Activated CD4-positive, alpha-beta T cell treated with anti-CD3 and anti-CD28 coated beads for 36 hours (primary cell): ENCODE measurements at regions of chr17 and their contacts with region 1.

Region 1: DNA sequence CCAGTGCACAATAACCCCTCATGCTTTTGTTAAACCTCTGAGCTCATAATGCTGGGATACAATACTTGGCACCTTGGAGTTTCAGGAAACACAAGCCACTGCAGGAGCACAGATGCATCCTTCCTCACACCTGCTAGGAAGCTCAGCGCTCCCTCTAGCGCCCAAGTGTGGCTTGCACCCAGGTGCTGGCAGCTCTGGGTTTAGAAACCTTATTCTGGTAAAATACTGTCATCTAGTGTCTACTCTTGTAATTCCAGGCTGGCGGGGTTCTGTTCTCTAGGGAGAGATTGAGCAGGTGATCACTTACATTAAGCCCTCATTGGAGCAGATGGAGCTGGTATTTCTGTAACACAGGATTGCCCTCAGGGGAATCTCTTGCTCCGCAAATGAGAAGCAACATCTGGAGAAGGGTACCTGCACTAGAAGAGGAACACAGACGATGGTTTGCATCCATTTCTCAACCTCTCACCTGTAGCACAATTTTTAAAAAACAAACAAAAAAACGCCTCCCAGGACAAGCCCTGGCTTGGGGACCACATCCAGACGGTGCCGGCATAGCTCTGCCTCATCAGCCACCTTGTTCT is 1.5 kb downstream of the CCL1 start:
- DNase-seq: peak; percentile 91
- ATAC-seq: peak; percentile 98
- H3K4me3 Mint-ChIP-seq: no peak overlapping the region
- H3K27ac Mint-ChIP-seq: no peak overlapping the region
- H3K4me1 Mint-ChIP-seq: peaks cover 10% of the 10 kb centered on the region
- H3K27me3 Mint-ChIP-seq: peaks cover 20% of the 10 kb centered on the region

Region 2: DNA sequence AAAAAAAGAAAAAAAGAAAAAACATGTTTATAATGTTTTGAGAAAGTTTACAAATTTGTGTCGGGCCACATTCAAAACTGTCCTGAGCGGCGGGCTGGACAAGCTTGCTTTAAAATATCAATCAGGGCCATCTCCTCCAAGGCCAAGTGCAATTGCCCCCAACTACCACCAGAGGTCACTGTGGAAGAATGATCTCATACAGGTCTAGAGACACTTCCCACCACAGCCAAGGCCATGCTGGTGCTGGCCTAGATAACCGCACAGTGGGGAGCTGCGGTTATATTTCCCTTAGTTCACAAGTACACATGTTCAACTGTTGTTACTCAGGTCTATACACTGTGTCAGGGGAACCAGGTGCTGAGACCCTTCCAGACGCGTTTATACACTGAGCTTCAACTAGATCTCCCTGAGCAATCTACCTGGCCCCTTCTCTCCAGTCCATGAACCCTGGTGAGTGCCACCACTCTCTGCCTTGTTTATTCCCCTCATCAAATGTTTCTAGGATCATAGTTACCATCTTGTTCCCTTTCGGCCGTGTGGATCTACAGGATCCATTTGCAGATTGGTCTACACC is 190.2 kb before region 1 on chr17:
- CTCF ChIA-PET with region 1: interaction called, 40 read pairs
- POLR2A ChIA-PET with region 1: no interaction called
- intact Hi-C with region 1: loop called in 1 of 2 experiments (anchors 1 kb)
- DNase-seq: peak; percentile 70
- ATAC-seq: peak; percentile 78
- H3K4me3 Mint-ChIP-seq: no peak overlapping the region
- H3K27ac Mint-ChIP-seq: no peak overlapping the region
- H3K4me1 Mint-ChIP-seq: no peaks in the 10 kb centered on the region
- H3K27me3 Mint-ChIP-seq: peaks cover 10% of the 10 kb centered on the region

Region 3: GRCh38 chr17:34207572-34207971 is 154.0 kb before region 1 on chr17:
- CTCF ChIA-PET with region 1: interaction called, 225 read pairs
- POLR2A ChIA-PET with region 1: no interaction called
- intact Hi-C with region 1: no loop called
- DNase-seq: no peak
- ATAC-seq: no peak
- H3K4me3 Mint-ChIP-seq: no peak overlapping the region
- H3K27ac Mint-ChIP-seq: no peak overlapping the region
- H3K4me1 Mint-ChIP-seq: no peaks in the 10 kb centered on the region
- H3K27me3 Mint-ChIP-seq: peaks cover 35% of the 10 kb centered on the region

Region 4: GRCh38 chr17:34378664-34379101 is 17.1 kb after region 1 on chr17:
- CTCF ChIA-PET with region 1: interaction called, 44 read pairs
- POLR2A ChIA-PET with region 1: no interaction called
- intact Hi-C with region 1: no loop called
- DNase-seq: peak; percentile 65
- ATAC-seq: peak; percentile 63
- H3K4me3 Mint-ChIP-seq: no peak overlapping the region
- H3K27ac Mint-ChIP-seq: no peak overlapping the region
- H3K4me1 Mint-ChIP-seq: peaks cover 56% of the 10 kb centered on the region
- H3K27me3 Mint-ChIP-seq: peaks cover 17% of the 10 kb centered on the region